ENCODE measurements at regions of chr14 and their contacts with region 1.

Region 1: GRCh38 chr14:69317104-69317755 is 57.3 kb downstream of the GALNT16 start:
- DNase-seq: peak; percentile 98
- ATAC-seq: peak; percentile 97
- H3K4me3 ChIP-seq: no peak overlapping the region
- H3K27ac ChIP-seq: peak overlapping the region; percentile 14; the same call in 1 of the 2 replicates
- H3K4me1 ChIP-seq: peaks cover 11% of the 10 kb centered on the region
- H3K27me3 ChIP-seq: no peaks in the 10 kb centered on the region
- CTCF ChIP-seq: no peak
- POLR2A ChIP-seq: no peak
- RAD21 ChIP-seq: peak; percentile 21; the same call in 1 of the 2 replicates

Region 2: DNA sequence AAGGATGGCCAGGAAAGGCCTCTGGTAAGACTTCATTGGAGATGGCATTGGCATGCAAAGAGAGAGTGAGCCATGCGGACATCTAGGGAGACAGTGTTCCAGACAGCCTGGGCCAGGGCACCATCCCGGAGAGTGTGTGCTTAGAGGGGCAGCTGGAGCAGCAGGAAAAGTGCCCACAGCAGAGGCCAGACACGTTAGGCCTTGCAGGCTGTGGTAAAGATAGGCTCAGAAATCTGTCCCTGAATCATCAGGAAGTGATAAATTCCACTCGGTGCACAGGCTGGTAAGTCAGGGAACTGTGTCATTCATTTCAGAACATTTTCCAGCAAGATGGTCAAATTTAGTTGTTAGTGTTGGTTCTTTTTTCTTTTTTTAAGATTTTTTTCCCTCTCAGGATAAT is 48.5 kb before region 1 on chr14:
- CTCF ChIA-PET with region 1: no interaction called
- POLR2A ChIA-PET with region 1: no interaction called
- dilution Hi-C with region 1: no loop called
- in situ Hi-C with region 1: no loop called
- intact Hi-C with region 1: loop called (anchors 5 kb)
- DNase-seq: peak; percentile 61
- ATAC-seq: peak; percentile 68
- H3K4me3 ChIP-seq: no peak overlapping the region
- H3K27ac ChIP-seq: no peak overlapping the region
- H3K4me1 ChIP-seq: peaks cover 10% of the 10 kb centered on the region
- H3K27me3 ChIP-seq: peaks cover 7% of the 10 kb centered on the region
- CTCF ChIP-seq: no peak
- POLR2A ChIP-seq: no peak
- RAD21 ChIP-seq: no peak

Measured in IMR-90 (cell line).